ENCODE measurements at regions of chr18 and their contacts with region 1.

Region 1: DNA sequence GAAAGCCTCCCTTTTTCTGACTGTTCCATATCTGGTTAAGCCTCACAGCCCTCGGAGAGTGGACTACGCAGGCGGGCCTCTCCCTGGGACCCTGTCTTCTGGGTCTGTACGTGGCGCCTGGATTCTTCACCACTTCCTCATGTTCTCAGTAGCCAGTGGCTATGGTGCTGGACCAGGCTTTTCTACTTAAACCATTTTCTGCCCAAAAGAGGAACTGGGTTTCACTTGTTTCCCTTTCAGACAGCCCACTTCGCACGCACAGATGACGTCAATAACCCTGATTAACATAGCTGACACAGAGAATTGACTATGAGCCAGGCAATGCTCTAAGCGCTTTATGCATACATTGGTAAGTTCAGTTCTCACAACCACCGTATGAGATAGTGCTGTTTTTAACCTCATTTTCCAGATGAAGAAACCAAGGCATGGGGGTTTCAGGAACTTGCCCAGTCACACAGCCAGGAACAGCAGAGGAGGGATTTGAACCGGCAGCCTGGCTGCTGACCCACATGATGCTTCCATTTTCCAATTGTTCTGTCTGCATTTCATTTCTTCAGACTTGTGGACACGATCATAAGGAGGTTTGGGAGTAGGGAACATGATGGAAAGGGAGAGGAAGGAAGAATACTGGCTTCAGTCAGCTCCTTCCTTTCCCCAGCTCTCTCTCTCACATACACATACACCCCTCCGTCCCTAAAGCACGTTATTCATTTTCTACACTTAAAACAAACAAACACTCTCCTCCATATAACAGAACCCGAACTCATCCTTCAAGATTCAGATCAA is 41.7 kb downstream of the MYOM1 start:
- DNase-seq: peak; percentile 19
- ATAC-seq: no peak
- H3K4me3 ChIP-seq: no peak overlapping the region
- H3K27ac ChIP-seq: no peak overlapping the region
- H3K4me1 ChIP-seq: peaks cover 10% of the 10 kb centered on the region
- H3K27me3 ChIP-seq: peaks cover 4% of the 10 kb centered on the region; the same call in 1 of the 2 replicates
- CTCF ChIP-seq: no peak
- POLR2A ChIP-seq: no peak
- RAD21 ChIP-seq: no peak

Region 2: GRCh38 chr18:3162181-3162580 is 15.9 kb before region 1 on chr18:
- CTCF ChIA-PET with region 1: no interaction called
- POLR2A ChIA-PET with region 1: interaction called, 11 read pairs
- dilution Hi-C with region 1: no loop called
- in situ Hi-C with region 1: no loop called
- intact Hi-C with region 1: no loop called
- DNase-seq: no peak
- ATAC-seq: no peak
- H3K4me3 ChIP-seq: no peak overlapping the region
- H3K27ac ChIP-seq: no peak overlapping the region
- H3K4me1 ChIP-seq: no peaks in the 10 kb centered on the region
- H3K27me3 ChIP-seq: peaks cover 2% of the 10 kb centered on the region
- CTCF ChIP-seq: no peak
- POLR2A ChIP-seq: no peak
- RAD21 ChIP-seq: no peak